ENCODE measurements at regions of chr14 and their contacts with region 1.

Region 1: DNA sequence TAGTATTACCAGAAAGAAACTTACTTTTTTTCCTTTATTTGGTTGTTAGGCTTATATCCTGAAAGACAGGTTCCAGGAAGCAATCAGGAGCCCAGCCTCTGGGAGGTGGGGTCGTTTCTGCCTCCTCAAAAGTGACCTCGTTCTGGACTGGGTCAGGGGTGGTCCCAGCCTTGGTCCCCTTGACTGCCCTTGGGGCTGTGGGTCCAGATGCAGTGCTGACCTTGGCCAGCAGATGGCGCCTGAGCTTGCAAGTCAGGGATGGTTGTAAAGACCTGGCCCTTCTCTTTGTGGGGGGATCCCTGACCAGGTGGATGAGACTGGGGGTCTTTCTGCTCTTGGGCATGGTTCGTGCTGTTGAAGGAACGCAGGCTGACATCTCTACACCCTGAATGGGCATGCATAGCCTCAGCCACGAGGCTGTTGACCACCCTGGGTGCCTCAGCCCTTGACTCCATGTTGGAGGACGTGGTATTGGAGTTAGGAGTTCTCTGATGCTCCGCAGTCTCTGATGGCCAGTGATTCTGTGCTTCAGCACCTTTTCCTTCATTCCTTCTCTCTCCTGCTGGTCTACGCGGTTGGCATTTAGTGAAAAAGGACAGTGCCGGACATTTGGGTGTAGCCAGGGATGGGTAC is 62.4 kb downstream of the ADCK1 start:
- DNase-seq: peak; percentile 88
- ATAC-seq: peak; percentile 77
- H3K4me3 Mint-ChIP-seq: no peak overlapping the region
- H3K27ac Mint-ChIP-seq: no peak overlapping the region
- H3K4me1 Mint-ChIP-seq: no peaks in the 10 kb centered on the region
- H3K27me3 Mint-ChIP-seq: no peaks in the 10 kb centered on the region

Region 2: DNA sequence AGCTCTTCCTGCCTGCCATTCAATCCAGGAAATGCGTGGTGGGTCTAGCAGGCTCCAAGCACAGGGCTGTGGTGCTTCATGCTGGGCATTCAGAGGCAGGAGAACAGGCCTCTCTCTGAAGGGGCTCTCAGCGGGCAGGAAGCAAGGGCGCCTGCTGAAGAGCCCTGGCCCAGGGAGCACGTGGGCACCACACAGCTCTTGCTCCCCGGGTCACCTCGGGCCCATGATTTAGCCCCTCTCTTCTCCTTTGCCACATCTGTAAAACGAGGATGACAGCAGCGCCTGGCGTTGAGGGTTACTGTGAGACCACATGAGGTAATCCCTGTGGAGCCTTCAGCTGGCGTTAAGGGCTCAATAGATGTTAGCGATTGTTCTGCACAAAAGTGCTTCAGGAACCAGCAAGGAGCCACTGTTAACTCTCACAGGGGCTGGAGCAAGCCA is 208.2 kb before region 1 on chr14:
- CTCF ChIA-PET with region 1: no interaction called
- POLR2A ChIA-PET with region 1: no interaction called
- intact Hi-C with region 1: no loop called
- DNase-seq: no peak
- ATAC-seq: no peak
- H3K4me3 Mint-ChIP-seq: no peak overlapping the region
- H3K27ac Mint-ChIP-seq: no peak overlapping the region
- H3K4me1 Mint-ChIP-seq: no peaks in the 10 kb centered on the region
- H3K27me3 Mint-ChIP-seq: no peaks in the 10 kb centered on the region

Region 3: DNA sequence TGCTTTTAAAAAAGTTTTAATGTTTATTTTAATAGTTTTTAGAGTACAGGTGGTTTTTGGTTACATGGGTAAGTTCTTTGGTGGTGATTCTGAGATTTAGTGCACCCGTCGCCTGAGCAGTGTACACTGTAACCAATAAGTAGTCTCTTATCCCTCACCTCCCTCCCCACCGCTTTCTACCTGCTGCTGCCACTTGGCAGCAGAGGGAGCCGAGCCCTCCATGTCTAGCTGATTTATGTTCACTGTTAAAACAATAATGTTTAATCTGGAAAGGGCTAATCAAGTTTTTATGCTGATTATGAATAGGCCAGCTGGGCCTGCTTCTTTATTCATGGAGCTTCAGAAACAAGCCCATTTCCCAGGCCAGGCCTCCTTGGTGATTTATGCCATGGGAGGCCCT is 10.7 kb after region 1 on chr14:
- CTCF ChIA-PET with region 1: interaction called, 11 read pairs
- POLR2A ChIA-PET with region 1: no interaction called
- intact Hi-C with region 1: no loop called
- DNase-seq: no peak
- ATAC-seq: no peak
- H3K4me3 Mint-ChIP-seq: no peak overlapping the region
- H3K27ac Mint-ChIP-seq: no peak overlapping the region
- H3K4me1 Mint-ChIP-seq: no peaks in the 10 kb centered on the region
- H3K27me3 Mint-ChIP-seq: no peaks in the 10 kb centered on the region

Region 4: DNA sequence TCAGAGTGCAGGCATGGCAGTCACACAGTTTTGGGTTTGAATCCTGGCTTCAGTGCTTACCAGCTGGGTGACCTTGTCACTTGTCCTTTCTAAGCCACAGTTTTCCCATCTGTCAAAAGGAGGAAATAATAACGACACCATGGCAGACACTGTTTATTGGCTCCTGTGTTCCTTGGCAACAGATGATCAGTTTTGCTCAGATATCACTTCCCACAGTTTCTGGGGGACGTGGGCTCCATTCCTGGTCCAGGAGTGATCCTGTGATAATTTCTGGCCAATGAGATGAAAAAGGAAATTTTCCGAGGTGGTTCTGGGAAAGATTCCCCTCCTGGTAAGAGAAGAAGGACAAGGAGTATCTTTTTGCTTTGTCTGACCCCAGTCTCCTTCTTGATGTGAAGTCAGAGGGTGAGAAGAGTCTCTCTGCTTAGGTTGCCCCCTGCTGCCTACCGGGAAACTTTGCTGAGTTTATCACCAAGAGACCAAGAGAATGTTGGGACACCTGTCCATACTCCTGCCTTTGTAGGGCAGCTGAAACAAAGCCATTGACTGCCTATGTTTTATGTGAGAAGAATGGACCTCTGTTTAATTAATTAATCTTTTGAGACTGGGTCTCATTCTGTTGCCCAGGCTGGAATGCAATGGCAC is 129.0 kb after region 1 on chr14:
- CTCF ChIA-PET with region 1: interaction called, 3 read pairs
- POLR2A ChIA-PET with region 1: no interaction called
- intact Hi-C with region 1: loop called in 1 of 2 experiments (anchors 2 kb)
- DNase-seq: peak; percentile 14
- ATAC-seq: no peak
- H3K4me3 Mint-ChIP-seq: no peak overlapping the region
- H3K27ac Mint-ChIP-seq: no peak overlapping the region
- H3K4me1 Mint-ChIP-seq: no peaks in the 10 kb centered on the region
- H3K27me3 Mint-ChIP-seq: no peaks in the 10 kb centered on the region

Region 5: DNA sequence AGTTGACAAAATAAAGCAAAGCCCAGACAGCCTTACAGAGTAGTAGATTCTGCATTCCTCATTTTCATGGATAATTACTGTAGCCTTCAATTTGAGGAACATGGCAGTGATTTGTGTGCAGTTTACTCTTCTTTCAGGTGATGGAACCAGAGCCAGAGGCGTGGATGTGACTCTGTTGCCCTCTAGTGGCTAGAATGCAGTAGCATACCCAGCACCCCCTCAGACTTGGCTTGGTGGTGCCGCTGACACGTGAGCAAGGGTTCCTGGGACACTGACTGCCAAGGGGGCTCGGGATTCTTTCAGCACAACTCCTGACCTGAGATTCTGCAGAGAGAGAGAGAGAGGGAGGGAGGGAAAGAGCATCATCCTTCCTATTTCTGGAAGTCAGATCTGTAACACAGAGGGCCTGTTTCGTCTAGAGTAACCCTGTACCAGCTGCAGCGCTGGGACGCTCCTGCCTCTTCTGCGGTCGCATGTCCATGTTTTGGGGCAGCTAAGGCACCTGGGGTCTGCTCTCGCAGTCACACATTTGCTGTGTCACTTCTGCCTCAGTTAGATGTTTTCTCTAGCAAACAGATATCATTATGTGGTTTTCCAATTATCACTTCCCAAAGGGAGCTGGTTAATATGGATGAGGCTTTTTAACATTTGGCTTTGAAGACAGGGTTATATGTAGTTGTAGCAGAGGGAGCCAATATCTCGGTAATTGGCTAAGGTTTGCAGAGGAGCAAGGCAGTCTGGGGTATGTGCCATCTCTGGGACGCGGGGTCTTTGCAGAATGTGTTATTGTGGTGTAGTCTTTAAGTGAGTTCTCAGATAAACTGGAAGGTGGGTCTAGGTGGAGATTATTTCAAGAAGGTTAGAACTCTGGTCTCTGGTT is 736.0 kb after region 1 on chr14:
- CTCF ChIA-PET with region 1: interaction called, 9 read pairs
- POLR2A ChIA-PET with region 1: no interaction called
- intact Hi-C with region 1: loop called (anchors 1 to 2 kb)
- DNase-seq: peak; percentile 67
- ATAC-seq: peak; percentile 88
- H3K4me3 Mint-ChIP-seq: no peak overlapping the region
- H3K27ac Mint-ChIP-seq: no peak overlapping the region
- H3K4me1 Mint-ChIP-seq: no peaks in the 10 kb centered on the region
- H3K27me3 Mint-ChIP-seq: peaks cover 22% of the 10 kb centered on the region

Region 6: DNA sequence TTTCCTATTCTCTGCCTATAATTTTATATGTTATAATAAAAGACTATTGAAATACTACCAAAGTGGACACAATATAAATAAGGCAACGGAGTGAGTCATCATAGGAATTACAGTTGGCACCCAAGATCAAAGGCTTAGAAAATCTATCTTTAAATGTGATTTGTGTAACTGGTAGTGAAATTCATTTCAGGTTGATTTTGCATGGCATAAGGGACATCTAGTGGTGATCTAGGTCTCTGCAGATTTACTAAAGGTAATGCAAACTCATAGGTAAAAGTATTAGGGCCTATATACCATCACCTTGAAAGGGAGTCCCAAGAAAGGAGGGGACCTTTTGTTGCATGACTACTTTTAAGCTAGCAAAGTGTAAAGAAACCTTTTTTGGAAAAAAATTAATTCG is 835.1 kb after region 1 on chr14:
- CTCF ChIA-PET with region 1: no interaction called
- POLR2A ChIA-PET with region 1: no interaction called
- intact Hi-C with region 1: loop called in 1 of 2 experiments (anchors 5 kb)
- DNase-seq: no peak
- ATAC-seq: no peak
- H3K4me3 Mint-ChIP-seq: no peak overlapping the region
- H3K27ac Mint-ChIP-seq: no peak overlapping the region
- H3K4me1 Mint-ChIP-seq: no peaks in the 10 kb centered on the region
- H3K27me3 Mint-ChIP-seq: peaks cover 4% of the 10 kb centered on the region

Measured in activated CD4-positive, alpha-beta T cell treated with anti-CD3 and anti-CD28 coated beads for 36 hours (primary cell).